Dorsolateral prefrontal cortex (tissue), 120 donors: ENCODE measurements at regions of chr7 and their contacts with region 1.

Region 1: GRCh38 chr7:2465928-2466327 is 10.3 kb downstream of the GRIFIN start:
- DNase-seq: peak in 1 of 10 donors; percentile 50
- H3K4me3 ChIP-seq: peak overlapping the region in 7 of 59 donors; percentile 9 to 35 (median 18)
- H3K27ac ChIP-seq: peak overlapping the region in 44 of 59 donors; percentile 3 to 79 (median 60)
- H3K27me3 ChIP-seq: no peaks in the 10 kb centered on the region
- CTCF ChIP-seq: peak in 1 of 56 donors; percentile 6

Region 2: DNA sequence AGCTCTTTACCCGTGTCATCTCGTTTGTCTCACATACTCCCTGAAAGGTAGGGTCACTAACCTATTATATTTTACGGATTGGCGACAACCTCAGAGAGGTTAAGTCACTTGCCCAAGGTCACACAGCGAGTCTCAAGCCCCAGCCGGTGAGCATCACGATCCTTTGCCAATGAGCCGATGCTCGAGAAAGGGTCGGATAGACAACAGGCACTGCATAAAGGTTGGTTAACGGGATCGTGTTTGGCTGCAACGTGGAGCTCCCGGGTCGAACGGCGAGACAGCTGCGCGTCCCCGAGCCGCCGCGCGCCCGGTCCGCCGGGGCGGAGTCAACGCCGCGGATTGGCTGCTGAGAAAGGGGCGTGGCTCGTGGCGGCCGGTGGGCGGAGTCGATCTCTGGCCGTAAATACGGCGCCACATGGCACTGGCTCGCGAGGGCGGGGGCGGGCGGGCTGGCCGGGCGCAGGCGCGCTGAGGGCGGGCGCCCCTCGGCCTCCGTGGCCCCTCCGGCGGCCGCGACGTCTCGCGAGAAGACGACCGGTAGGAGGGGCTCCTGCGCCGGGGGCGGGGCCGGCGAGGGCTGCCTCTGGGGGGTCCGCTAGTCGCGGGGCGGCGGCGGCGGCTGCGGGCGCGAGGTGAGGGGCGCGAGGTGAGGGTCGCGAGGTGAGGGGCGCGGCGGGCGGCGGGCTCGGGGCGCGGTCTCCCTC is 62.8 kb before region 1 on chr7 and contains the start of gene CHST12:
- intact Hi-C with region 1: loop called (anchors 10 kb)
- DNase-seq: peak; percentile 88 to 97 (median 94)
- H3K4me3 ChIP-seq: peak within 1 kb of the TSS; percentile 69 to 99 (median 89)
- H3K27ac ChIP-seq: peak within 1 kb of the TSS in 51 of 59 donors; percentile 2 to 88 (median 69)
- H3K27me3 ChIP-seq: no peaks in the 10 kb centered on the region
- CTCF ChIP-seq: peak in 9 of 56 donors; percentile 5 to 41 (median 19)
- total RNA-seq, gene CHST12: 19.5 to 66.3 (median 29.6) TPM

Region 3: DNA sequence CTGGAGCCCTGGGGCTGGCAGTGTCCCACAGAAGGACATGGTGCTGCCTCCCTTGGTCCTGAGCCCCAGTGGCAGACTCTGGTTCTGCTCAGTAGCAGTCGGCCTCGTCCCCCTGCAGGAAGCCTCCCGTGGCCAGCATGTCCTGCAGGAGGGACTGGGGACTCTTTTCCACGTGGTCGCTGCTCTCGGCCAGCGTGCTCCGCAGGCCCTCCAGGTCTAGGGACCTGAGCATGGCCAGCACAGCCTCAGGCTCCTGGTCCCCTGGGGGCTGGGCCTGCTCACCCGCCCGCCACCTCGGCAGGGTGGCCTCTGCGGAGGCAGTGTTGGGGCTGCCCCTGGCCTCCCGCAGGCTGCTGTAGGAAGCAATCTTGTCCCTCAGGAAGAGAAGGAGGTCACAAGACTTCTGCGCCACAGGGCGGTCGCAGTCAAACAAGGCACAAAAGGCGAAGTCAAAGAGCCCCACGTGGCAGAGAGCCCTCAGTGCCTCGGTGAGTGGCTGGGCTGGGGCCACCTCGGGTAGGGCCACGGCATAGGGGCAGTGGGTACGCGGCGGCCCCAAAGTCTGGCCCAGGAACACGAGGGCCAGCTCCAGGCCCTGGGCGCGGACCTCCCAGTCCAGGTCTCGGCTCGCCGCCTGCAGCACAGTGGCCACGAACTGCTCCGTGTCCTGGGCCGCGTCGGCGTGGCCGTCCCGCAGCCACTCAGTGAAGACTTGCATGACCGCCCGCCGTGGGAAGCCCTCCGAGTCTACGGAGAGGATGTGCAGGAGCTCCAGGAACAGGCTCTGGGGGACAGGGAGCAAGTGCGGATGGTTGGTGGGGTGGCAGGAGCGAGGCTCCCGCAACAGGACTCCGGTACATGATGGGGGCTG is 72.3 kb after region 1 on chr7:
- intact Hi-C with region 1: no loop called
- DNase-seq: peak in 2 of 10 donors; percentile 39 to 42
- H3K4me3 ChIP-seq: no peak overlapping the region
- H3K27ac ChIP-seq: no peak overlapping the region
- H3K27me3 ChIP-seq: no peaks in the 10 kb centered on the region
- CTCF ChIP-seq: no peak